Heart left ventricle (tissue), 16 donors: ENCODE measurements at regions of chr6 and their contacts with region 1.

Region 1: DNA sequence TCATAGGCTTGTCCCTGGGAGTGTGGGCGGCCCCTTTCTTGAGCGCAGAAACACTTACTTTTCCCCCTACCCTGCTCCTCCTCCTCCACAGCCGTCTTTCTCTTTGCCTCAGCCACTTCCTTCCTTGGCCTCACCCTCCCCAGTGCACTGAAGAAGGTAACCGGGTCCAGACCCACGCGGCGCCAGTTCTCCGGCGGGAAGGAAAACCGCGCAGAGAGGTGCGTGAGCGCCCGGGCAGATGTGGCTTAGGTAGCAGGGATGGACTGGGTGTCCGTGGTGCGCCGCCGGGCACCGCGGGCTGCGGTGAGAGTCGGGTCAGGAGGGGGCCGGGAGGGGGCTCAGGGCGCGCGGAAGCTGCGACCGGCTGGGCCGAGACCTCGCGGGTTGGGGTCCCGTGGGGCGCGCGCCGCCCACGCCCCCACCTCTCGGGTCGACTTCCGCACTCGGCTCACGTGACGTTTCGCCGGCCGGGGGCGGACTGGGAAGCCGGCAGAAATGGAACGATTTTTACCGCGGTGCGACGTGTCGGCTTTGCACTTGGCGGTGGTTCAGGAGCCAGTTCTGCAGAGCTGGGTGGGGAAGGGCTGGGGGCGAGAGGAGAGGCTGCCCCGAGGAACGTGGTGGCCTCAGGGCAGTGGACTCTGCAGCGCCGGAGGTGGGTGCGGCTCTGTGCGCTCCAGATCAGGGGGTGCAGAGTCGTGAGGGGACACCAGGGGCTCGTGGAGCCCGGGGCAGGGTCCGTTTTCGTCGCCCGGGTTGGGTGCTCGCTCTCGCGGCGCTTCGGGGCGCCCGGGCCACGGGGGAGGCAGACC is at the start of gene ABRACL:
- DNase-seq: peak; percentile 58 to 78 (median 66)
- ATAC-seq: peak; percentile 47 to 79 (median 76)
- H3K4me3 ChIP-seq: peak within 1 kb of the TSS; percentile 68 to 98 (median 93)
- H3K27ac ChIP-seq: peak within 1 kb of the TSS; percentile 11 to 97 (median 88)
- H3K4me1 ChIP-seq: peaks cover 0 to 46% (median 10%) of the 10 kb centered on the region in 12 donors
- H3K27me3 ChIP-seq: no peaks in the 10 kb centered on the region
- CTCF ChIP-seq: no peak
- POLR2A ChIP-seq: no peak
- total RNA-seq, gene ABRACL: 3.2 to 26.3 (median 7.6) TPM

Region 2: DNA sequence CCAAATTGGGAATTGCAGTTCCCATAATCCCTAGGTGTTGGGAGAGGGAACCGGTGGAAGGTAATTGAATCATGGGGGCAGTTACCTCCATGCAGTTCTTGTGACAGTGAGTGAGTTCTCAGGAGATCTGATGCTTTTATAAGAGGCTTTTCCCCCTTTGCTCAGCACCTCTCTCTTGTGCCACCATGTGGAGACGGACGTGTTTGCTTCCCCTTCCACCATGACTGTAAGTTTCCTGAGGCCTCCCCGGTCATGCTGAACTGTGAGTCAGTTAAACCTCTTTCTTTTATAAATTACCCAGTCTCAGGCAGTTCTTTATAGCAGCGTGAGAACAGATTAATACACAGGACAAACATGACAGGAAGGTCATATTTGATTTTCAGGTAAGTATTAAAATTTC is 80.7 kb after region 1 on chr6:
- intact Hi-C with region 1: loop called in 1 of 10 experiments (anchors 5 kb)
- DNase-seq: no peak
- ATAC-seq: peak in 3 of 4 donors; percentile 42 to 59 (median 45)
- H3K4me3 ChIP-seq: no peak overlapping the region
- H3K27ac ChIP-seq: no peak overlapping the region
- H3K4me1 ChIP-seq: no peaks in the 10 kb centered on the region
- H3K27me3 ChIP-seq: no peaks in the 10 kb centered on the region
- CTCF ChIP-seq: peak; percentile 17 to 55 (median 36)
- POLR2A ChIP-seq: no peak